Colonic mucosa (tissue), 4 donors: ENCODE measurements at regions of chr1 and their contacts with region 1.

Region 1: DNA sequence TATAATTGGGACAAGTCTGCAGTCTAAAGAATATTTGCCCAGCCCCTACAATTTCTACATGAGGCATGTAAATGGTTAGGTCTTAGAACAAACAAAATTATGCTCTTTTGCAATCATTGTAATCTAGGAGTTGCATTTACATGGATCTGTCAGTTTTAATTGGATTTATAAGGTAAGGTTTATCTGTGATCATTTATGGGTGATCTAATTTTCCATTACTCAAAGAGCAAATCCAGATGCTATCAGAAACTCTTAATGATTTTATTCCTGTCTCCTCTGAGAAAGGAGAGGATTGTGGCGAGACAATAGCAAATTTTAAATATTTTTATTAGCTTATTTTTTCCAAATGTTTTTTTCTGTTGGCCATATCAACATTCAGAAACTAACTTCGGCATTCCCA is 14.1 kb upstream of the NEGR1 start:
- DNase-seq: no peak
- H3K4me3 ChIP-seq: no peak overlapping the region
- H3K27ac ChIP-seq: no peak overlapping the region
- H3K4me1 ChIP-seq: no peaks in the 10 kb centered on the region
- H3K27me3 ChIP-seq: no peaks in the 10 kb centered on the region
- CTCF ChIP-seq: no peak

Region 2: DNA sequence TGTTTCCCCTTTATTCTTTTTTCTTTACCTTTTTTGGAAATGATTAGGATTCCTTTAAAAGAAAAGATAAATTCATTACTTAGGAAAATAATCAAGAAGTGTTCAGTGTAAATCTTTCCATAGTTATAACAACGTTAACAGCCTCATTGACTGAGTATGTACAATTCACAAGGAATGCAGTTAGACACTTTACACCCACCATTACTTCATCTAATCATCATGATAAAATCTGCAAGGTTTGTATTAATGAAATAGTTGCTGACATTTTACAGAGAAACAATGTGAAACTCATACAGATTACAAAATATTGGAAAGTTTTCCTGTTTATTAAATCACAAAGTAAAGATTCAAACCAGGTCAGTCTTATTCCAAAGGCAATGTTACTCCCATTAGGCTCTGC is 45.2 kb after region 1 on chr1:
- intact Hi-C with region 1: loop called (anchors 2 kb)
- DNase-seq: no peak
- H3K4me3 ChIP-seq: no peak overlapping the region
- H3K27ac ChIP-seq: no peak overlapping the region
- H3K4me1 ChIP-seq: no peaks in the 10 kb centered on the region
- H3K27me3 ChIP-seq: no peaks in the 10 kb centered on the region
- CTCF ChIP-seq: no peak

Region 3: GRCh38 chr1:72678683-72679082 is 382.2 kb after region 1 on chr1:
- intact Hi-C with region 1: no loop called
- DNase-seq: no peak
- H3K4me3 ChIP-seq: no peak overlapping the region
- H3K27ac ChIP-seq: no peak overlapping the region
- H3K4me1 ChIP-seq: no peaks in the 10 kb centered on the region
- H3K27me3 ChIP-seq: no peaks in the 10 kb centered on the region
- CTCF ChIP-seq: no peak

Region 4: DNA sequence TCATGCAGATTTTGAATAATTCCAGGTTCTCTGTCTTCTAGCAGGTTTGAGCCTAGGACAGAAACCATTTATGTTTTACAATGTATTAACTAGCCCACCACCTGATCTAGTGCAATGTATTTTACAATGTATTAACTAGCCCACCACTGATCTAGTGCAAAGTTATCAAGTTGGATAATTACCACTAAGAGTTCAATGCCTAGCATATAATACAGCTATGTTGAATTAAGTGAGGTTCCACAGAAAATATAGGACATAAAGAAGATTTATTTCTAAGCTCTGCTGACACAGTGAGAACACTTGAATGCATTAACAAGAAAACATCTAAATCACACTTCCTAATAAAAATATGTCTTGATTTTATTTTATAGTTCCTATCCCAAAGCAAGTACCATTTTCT is 840.5 kb after region 1 on chr1:
- intact Hi-C with region 1: no loop called
- DNase-seq: no peak
- H3K4me3 ChIP-seq: no peak overlapping the region
- H3K27ac ChIP-seq: no peak overlapping the region
- H3K4me1 ChIP-seq: no peaks in the 10 kb centered on the region
- H3K27me3 ChIP-seq: no peaks in the 10 kb centered on the region
- CTCF ChIP-seq: no peak